Ovary (tissue), 10 donors: ENCODE measurements at regions of chr5 and their contacts with region 1.

Region 1: GRCh38 chr5:79857714-79858409 is 133.2 kb downstream of the MTX3 start:
- DNase-seq: peak; percentile 67 to 87 (median 85)
- H3K4me3 ChIP-seq: no peak overlapping the region
- H3K27ac ChIP-seq: no peak overlapping the region
- H3K4me1 ChIP-seq: no peaks in the 10 kb centered on the region
- H3K27me3 ChIP-seq: no peaks in the 10 kb centered on the region
- CTCF ChIP-seq: peak; percentile 80 to 87 (median 86)
- EP300 ChIP-seq: no peak
- POLR2A ChIP-seq: no peak

Region 2: DNA sequence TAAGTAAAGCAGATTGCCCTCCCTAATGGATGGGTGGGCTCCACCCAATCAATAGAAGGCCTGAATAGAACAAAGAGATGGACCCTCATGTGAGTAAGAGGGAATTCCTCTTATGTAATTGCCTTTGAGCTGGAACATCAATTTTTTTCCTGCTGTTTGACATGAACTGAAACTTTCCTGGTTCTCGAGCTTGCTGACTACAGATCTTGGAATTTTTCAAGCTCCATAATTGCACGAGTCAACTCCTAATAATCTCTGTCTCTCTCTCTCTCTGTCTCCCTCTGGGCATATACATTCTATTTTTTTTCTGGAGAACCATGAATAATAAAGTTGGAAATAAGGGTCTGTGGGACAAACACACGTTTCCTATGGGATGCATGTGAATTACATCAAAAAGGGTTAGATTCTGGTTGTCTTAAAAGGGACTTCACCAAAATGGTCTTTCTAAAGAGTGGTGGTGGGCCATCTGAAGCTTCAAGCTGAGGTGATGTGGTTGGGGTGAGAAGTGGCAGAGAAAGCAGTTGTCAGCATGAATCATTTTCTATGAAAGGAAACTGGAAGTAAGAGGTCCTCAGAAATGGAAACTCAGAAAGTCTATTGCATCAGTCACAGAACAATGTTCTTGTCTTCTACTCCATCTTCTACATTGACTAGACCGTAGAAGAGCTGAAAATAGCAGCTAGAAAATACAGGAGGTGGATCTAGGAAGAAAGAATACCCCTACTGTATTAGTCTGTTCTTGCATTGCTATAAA is 296.9 kb before region 1 on chr5:
- intact Hi-C with region 1: loop called in 1 of 4 experiments (anchors 10 kb)
- DNase-seq: no peak
- H3K4me3 ChIP-seq: no peak overlapping the region
- H3K27ac ChIP-seq: no peak overlapping the region
- H3K4me1 ChIP-seq: no peaks in the 10 kb centered on the region
- H3K27me3 ChIP-seq: no peaks in the 10 kb centered on the region
- CTCF ChIP-seq: no peak
- EP300 ChIP-seq: no peak
- POLR2A ChIP-seq: no peak

Region 3: GRCh38 chr5:79573983-79574890 is 283.6 kb before region 1 on chr5:
- intact Hi-C with region 1: loop called in 2 of 4 experiments (anchors 5 to 10 kb)
- DNase-seq: no peak
- H3K4me3 ChIP-seq: no peak overlapping the region
- H3K27ac ChIP-seq: no peak overlapping the region
- H3K4me1 ChIP-seq: no peaks in the 10 kb centered on the region
- H3K27me3 ChIP-seq: no peaks in the 10 kb centered on the region
- CTCF ChIP-seq: no peak
- EP300 ChIP-seq: no peak
- POLR2A ChIP-seq: no peak

Region 4: GRCh38 chr5:79663212-79663611 is 194.7 kb before region 1 on chr5:
- intact Hi-C with region 1: no loop called
- DNase-seq: no peak
- H3K4me3 ChIP-seq: no peak overlapping the region
- H3K27ac ChIP-seq: no peak overlapping the region
- H3K4me1 ChIP-seq: no peaks in the 10 kb centered on the region
- H3K27me3 ChIP-seq: no peaks in the 10 kb centered on the region
- CTCF ChIP-seq: no peak
- EP300 ChIP-seq: no peak
- POLR2A ChIP-seq: no peak

Region 5: GRCh38 chr5:79712741-79713140 is 145.1 kb before region 1 on chr5:
- intact Hi-C with region 1: no loop called
- DNase-seq: no peak
- H3K4me3 ChIP-seq: no peak overlapping the region
- H3K27ac ChIP-seq: no peak overlapping the region
- H3K4me1 ChIP-seq: no peaks in the 10 kb centered on the region
- H3K27me3 ChIP-seq: no peaks in the 10 kb centered on the region
- CTCF ChIP-seq: no peak
- EP300 ChIP-seq: no peak
- POLR2A ChIP-seq: no peak

Region 6: GRCh38 chr5:80204808-80205614 is 347.1 kb after region 1 on chr5:
- intact Hi-C with region 1: no loop called
- DNase-seq: peak in 2 of 5 donors; percentile 44 to 54
- H3K4me3 ChIP-seq: no peak overlapping the region
- H3K27ac ChIP-seq: peak overlapping the region in 1 of 2 donors; percentile 47
- H3K4me1 ChIP-seq: peaks cover 5% of the 10 kb centered on the region
- H3K27me3 ChIP-seq: no peaks in the 10 kb centered on the region
- CTCF ChIP-seq: no peak
- EP300 ChIP-seq: no peak
- POLR2A ChIP-seq: no peak

Region 7: GRCh38 chr5:80565330-80565729 is 707.5 kb after region 1 on chr5:
- intact Hi-C with region 1: no loop called
- DNase-seq: no peak
- H3K4me3 ChIP-seq: no peak overlapping the region
- H3K27ac ChIP-seq: no peak overlapping the region
- H3K4me1 ChIP-seq: no peaks in the 10 kb centered on the region
- H3K27me3 ChIP-seq: no peaks in the 10 kb centered on the region
- CTCF ChIP-seq: no peak
- EP300 ChIP-seq: no peak
- POLR2A ChIP-seq: no peak